Vagina (tissue), 2 donors: ENCODE measurements at regions of chr22 and their contacts with region 1.

Region 1: GRCh38 chr22:41332217-41332939 is 31.1 kb downstream of the ZC3H7B start:
- DNase-seq: no peak
- H3K4me3 ChIP-seq: no peak overlapping the region
- H3K27ac ChIP-seq: no peak overlapping the region
- H3K4me1 ChIP-seq: no peaks in the 10 kb centered on the region
- H3K27me3 ChIP-seq: no peaks in the 10 kb centered on the region
- CTCF ChIP-seq: no peak
- POLR2A ChIP-seq: no peak

Region 2: DNA sequence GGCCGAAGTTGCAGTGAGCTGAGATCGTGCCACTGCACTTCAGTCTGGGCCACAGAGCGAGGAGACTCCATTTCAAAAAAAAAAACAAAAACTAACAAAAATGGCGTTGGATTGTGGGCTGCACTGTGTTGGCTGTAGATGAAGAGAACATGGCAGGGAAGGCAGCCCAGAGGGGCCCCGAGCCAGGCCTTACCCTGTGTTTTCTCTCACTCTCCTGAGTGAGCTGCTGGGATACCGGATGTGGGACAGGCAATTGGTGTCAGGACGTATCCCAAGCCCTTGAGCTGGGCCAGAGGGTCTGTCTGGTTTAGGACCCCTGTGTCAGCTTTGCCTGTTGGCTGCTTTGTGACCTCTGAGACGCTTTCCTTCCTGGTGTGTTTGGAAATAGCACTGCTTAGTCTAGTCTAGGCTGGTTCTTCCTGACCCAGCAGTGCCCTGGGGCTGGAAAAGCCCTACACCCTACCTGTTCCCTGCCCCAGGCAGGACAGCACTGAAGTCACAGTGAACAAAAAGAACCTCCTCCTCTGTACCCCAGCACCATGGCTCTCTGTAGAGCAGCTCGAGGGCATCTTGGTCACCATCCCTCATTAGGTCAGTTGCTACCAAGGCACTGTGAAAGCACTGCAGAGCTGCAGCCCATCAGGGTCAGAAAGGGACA is 109.4 kb before region 1 on chr22:
- intact Hi-C with region 1: loop called (anchors 1 kb)
- DNase-seq: no peak
- H3K4me3 ChIP-seq: no peak overlapping the region
- H3K27ac ChIP-seq: no peak overlapping the region
- H3K4me1 ChIP-seq: peaks cover 3% of the 10 kb centered on the region
- H3K27me3 ChIP-seq: no peaks in the 10 kb centered on the region
- CTCF ChIP-seq: no peak
- POLR2A ChIP-seq: no peak